ENCODE measurements at regions of chr14 and their contacts with region 1.

Region 1: DNA sequence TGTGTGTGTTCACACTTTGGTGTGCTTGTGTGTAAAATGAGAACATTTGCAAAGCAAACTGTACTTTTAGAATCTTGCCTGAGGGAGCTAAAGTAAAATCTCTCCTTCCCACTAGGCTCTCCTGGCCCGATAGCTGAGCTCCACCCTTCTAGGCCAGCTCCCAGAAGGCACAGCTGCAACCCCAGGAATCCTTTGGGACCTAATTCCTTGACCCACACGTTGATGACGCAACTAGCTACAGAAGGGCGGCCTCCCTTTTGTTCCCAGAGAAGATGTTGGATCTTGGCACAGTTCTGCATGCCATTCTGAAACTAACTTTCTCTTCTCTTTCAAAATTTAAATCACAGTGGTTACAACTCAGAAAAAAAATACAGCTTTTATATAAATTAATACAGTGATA is 268.1 kb downstream of the EGLN3 start:
- DNase-seq: no peak
- ATAC-seq: no peak
- H3K4me3 ChIP-seq: no peak overlapping the region
- H3K27ac ChIP-seq: no peak overlapping the region
- H3K4me1 ChIP-seq: no peaks in the 10 kb centered on the region
- H3K27me3 ChIP-seq: no peaks in the 10 kb centered on the region
- CTCF ChIP-seq: no peak
- EP300 ChIP-seq: no peak
- POLR2A ChIP-seq: no peak
- RAD21 ChIP-seq: no peak

Region 2: DNA sequence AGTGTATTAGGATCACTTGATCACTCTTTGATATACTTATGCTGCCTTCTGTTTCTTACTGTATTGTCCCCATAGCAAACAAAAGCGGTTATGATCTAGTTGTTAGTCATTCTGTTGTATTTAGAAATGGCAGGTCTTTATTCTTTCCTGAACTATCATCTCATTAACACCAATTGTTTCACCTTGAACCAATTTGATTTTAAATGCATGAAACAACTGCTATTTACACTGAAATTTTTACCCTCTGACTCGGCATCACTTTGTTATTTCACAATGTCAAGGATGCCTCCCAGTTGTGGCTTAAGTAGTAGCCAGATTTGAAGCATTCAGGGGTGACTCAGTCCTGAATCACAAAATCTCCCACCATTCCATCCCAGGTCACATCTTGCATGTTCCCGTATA is 35.4 kb before region 1 on chr14:
- CTCF ChIA-PET with region 1: interaction called, 4 read pairs
- POLR2A ChIA-PET with region 1: interaction called, 11 read pairs
- RAD21 ChIA-PET with region 1: no interaction called
- SMC1A ChIA-PET with region 1: interaction called, 96 read pairs
- in situ Hi-C with region 1: no loop called
- intact Hi-C with region 1: no loop called
- DNase-seq: no peak
- ATAC-seq: no peak
- H3K4me3 ChIP-seq: no peak overlapping the region
- H3K27ac ChIP-seq: no peak overlapping the region
- H3K4me1 ChIP-seq: no peaks in the 10 kb centered on the region
- H3K27me3 ChIP-seq: no peaks in the 10 kb centered on the region
- CTCF ChIP-seq: no peak
- EP300 ChIP-seq: no peak
- POLR2A ChIP-seq: no peak
- RAD21 ChIP-seq: no peak

Region 3: DNA sequence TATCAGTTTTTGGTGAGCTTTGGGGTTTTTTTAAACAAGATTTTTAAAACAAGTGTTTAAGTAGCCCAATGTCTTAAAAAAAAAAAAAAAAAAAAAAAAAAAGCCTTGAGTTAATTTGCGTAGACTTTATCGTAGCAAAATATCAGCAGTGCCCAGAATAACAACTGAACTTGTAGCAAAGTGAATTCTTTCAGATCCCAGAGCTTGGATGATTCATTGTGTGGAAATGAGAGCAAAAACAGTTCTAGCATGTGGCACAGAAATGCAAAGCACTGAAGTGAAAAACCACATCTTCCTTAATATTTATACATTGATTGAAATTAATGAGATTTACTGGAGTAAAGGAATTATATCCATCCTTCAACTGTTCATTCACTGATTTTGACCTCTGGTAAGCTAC is 10.0 kb after region 1 on chr14:
- CTCF ChIA-PET with region 1: interaction called, 6 read pairs
- POLR2A ChIA-PET with region 1: interaction called, 4 read pairs
- RAD21 ChIA-PET with region 1: interaction called, 15 read pairs
- SMC1A ChIA-PET with region 1: interaction called, 30 read pairs
- in situ Hi-C with region 1: no loop called
- intact Hi-C with region 1: no loop called
- DNase-seq: no peak
- ATAC-seq: no peak
- H3K4me3 ChIP-seq: no peak overlapping the region
- H3K27ac ChIP-seq: no peak overlapping the region
- H3K4me1 ChIP-seq: no peaks in the 10 kb centered on the region
- H3K27me3 ChIP-seq: no peaks in the 10 kb centered on the region
- CTCF ChIP-seq: no peak
- EP300 ChIP-seq: no peak
- POLR2A ChIP-seq: no peak
- RAD21 ChIP-seq: no peak

Region 4: DNA sequence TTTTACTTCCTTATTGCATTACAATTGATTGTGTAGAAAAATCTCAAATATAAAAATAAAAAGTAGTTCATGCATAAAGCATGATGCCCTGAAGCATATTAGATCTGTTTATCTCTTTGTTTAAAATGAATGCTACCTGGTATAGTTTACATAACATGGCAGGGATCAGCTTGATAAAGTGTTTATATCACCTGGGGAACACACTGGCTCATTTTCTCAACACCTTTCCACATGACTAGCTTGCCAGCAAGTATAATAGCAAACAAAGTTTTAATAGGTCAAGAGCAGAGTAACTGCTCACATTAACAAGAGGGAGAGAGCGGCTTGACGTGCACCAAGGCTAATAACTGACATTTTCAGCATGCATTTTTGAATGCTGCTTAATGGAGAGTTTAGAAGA is 21.7 kb after region 1 on chr14:
- CTCF ChIA-PET with region 1: interaction called, 4 read pairs
- POLR2A ChIA-PET with region 1: interaction called, 8 read pairs
- RAD21 ChIA-PET with region 1: interaction called, 15 read pairs
- SMC1A ChIA-PET with region 1: interaction called, 9 read pairs
- in situ Hi-C with region 1: no loop called
- intact Hi-C with region 1: no loop called
- DNase-seq: no peak
- ATAC-seq: peak; percentile 43; the same call in 1 of the 3 replicates
- H3K4me3 ChIP-seq: no peak overlapping the region
- H3K27ac ChIP-seq: no peak overlapping the region
- H3K4me1 ChIP-seq: no peaks in the 10 kb centered on the region
- H3K27me3 ChIP-seq: no peaks in the 10 kb centered on the region
- CTCF ChIP-seq: no peak
- EP300 ChIP-seq: no peak
- POLR2A ChIP-seq: no peak
- RAD21 ChIP-seq: no peak

Region 5: DNA sequence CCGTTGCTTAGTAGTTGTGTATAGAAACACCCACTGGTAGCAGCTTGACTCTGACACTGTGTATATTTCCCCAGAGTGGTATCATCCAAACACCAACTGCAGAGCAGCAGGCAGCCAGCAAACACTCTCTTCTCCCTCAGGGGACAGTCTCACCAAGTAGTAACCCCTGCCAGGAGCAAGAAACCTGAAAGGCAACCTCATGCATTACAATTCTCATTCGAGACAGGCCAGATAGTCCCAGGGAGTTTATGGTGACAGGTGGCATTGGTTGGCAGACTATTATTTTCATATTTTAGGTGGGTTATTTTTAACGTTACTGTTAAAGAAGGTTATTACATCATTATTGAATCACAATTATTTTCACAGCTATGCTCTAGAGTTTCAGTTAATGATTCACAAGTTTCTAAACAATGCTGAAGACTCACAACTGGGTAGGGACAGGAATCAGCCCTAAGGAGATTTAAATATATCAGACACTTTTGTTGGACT is 45.3 kb after region 1 on chr14:
- CTCF ChIA-PET with region 1: interaction called, 6 read pairs
- POLR2A ChIA-PET with region 1: interaction called, 4 read pairs
- RAD21 ChIA-PET with region 1: interaction called, 29 read pairs
- SMC1A ChIA-PET with region 1: interaction called, 21 read pairs
- in situ Hi-C with region 1: no loop called
- intact Hi-C with region 1: no loop called
- DNase-seq: no peak
- ATAC-seq: peak; percentile 72
- H3K4me3 ChIP-seq: no peak overlapping the region
- H3K27ac ChIP-seq: no peak overlapping the region
- H3K4me1 ChIP-seq: no peaks in the 10 kb centered on the region
- H3K27me3 ChIP-seq: no peaks in the 10 kb centered on the region; a peak in 1 of 4 replicates
- CTCF ChIP-seq: no peak
- EP300 ChIP-seq: no peak
- POLR2A ChIP-seq: no peak
- RAD21 ChIP-seq: no peak

Measured in GM12878 (cell line).